OCI-LY7 (cell line): ENCODE measurements at regions of chr6 and their contacts with region 1.

Region 1: DNA sequence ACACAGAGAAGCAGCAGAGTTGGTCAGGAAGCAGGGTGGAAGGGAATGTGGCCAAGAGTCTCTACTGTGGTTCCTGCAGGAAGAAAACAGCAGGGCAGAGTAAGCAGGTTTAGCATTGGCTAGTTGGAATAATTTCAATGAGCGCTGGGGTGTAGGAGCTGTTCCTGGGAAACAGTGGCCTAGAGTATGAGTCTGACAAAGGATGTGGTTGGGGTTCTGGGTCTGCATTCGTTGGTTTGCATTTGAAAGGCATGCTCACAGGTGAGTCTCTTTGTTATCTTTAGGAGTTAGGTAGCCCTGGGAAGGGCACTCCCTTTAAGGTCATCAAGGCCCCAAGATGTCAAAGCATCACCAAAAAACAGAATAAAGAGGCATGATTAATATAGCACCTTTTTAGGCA is 911.6 kb upstream of the SLC35B3 start:
- DNase-seq: no peak
- H3K4me3 ChIP-seq: no peak overlapping the region
- H3K27ac ChIP-seq: no peak overlapping the region
- H3K4me1 ChIP-seq: no peaks in the 10 kb centered on the region
- CTCF ChIP-seq: no peak

Region 2: DNA sequence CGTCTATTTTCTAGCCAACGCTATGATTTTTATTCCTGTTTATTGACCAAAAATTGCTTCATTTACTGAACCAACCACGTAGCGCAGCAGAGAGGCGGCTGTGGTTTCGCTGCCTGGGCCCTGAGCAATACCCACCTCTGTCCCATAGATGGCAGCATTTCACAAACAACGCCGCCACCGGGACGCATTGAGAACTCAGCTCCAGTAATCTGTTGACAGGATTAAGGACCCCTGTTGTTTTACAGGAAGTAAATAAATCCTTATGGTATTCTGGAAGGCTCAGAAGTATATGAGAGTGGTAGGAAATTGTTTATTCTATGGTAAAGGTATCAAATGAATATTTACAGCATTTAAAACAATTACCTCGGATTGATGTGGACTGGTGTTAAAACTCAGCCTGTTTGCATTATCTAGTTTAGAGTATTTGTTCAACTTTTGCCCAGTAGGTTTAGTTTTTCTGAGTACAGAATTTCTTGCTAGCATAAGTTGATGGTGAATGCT is 363.7 kb before region 1 on chr6:
- CTCF ChIA-PET with region 1: no interaction called
- POLR2A ChIA-PET with region 1: no interaction called
- intact Hi-C with region 1: no loop called
- DNase-seq: peak; percentile 47
- H3K4me3 ChIP-seq: no peak overlapping the region
- H3K27ac ChIP-seq: no peak overlapping the region
- H3K4me1 ChIP-seq: no peaks in the 10 kb centered on the region
- CTCF ChIP-seq: peak; percentile 96

Region 3: GRCh38 chr6:9178071-9178470 is 168.9 kb before region 1 on chr6:
- CTCF ChIA-PET with region 1: no interaction called
- POLR2A ChIA-PET with region 1: no interaction called
- intact Hi-C with region 1: no loop called
- DNase-seq: no peak
- H3K4me3 ChIP-seq: no peak overlapping the region
- H3K27ac ChIP-seq: no peak overlapping the region
- H3K4me1 ChIP-seq: no peaks in the 10 kb centered on the region
- CTCF ChIP-seq: no peak

Region 4: DNA sequence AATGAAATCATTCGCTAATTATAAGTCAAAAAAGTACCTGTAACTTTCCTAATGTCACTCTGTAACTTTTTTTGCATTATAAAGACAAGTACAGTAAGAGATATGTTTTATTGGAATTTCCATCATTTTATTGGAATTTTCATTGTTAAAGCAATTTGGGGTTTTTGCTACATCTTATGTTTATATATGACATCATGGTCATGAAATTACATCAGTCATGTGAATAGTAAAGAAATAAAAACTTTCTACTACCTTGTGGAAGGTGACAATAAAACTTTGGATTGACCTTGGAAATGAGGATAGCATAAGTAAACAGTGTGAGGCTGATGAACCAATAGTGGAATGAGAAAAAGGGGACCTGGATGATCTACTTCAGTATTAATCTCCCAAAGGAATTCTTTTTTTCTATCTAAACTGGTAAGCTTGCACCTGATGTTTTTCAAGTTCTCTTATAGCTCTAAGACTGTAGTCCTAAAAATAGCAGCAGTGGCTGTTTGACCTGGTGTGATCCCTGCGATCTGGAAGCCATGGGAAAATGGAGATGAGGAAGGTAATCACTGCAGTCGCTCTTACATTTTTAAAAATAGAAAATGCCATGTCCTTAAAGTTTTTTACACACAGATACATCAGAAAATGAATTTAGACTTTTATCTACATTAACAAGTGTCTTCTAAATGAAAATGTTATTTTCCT is 14.7 kb after region 1 on chr6:
- CTCF ChIA-PET with region 1: no interaction called
- POLR2A ChIA-PET with region 1: no interaction called
- intact Hi-C with region 1: loop called (anchors 2 kb)
- DNase-seq: no peak
- H3K4me3 ChIP-seq: no peak overlapping the region
- H3K27ac ChIP-seq: no peak overlapping the region
- H3K4me1 ChIP-seq: no peaks in the 10 kb centered on the region
- CTCF ChIP-seq: no peak